Sigmoid colon (tissue), 7 donors: ENCODE measurements at regions of chr3 and their contacts with region 1.

Region 1: DNA sequence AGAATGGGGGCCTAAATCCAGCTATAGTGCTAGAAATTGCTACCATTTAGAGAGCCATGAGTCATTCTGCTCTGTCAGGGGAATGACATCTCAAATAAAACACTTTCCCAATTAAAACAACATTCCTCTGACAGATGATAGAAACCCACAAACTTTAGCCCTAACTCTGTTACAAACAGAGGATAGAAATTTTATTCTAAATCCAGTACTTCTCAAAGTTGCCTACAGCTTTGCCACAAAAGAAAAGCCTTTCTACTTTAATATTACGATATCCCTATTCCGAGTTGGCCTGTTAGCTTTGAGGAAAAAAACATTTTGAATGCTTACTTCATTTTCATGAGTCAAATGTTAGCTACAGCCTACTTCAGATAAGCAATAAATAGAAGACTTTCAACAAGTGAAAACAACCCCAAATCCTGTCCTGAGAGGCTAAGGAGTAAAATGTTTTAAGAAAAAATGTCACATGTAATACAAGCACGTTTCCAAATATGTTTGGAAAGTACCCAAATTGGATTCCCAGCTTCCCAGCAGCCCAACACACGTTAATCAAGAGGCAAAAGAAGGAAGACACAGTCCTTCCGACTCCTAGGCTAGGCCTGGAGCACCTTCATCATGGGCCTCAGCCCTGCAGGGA is 83.6 kb downstream of the ATP1B3 start:
- DNase-seq: no peak
- H3K4me3 ChIP-seq: no peak overlapping the region
- H3K27ac ChIP-seq: peak overlapping the region in 3 of 4 donors; percentile 32 to 64 (median 51)
- H3K4me1 ChIP-seq: peaks cover 0 to 22% (median 14%) of the 10 kb centered on the region in 4 donors
- H3K27me3 ChIP-seq: no peaks in the 10 kb centered on the region
- CTCF ChIP-seq: no peak
- EP300 ChIP-seq: no peak
- POLR2A ChIP-seq: no peak

Region 2: GRCh38 chr3:142007710-142008399 is 47.8 kb after region 1 on chr3:
- intact Hi-C with region 1: no loop called
- DNase-seq: no peak
- H3K4me3 ChIP-seq: no peak overlapping the region
- H3K27ac ChIP-seq: no peak overlapping the region
- H3K4me1 ChIP-seq: peaks cover 0 to 30% (median 20%) of the 10 kb centered on the region in 4 donors
- H3K27me3 ChIP-seq: no peaks in the 10 kb centered on the region
- CTCF ChIP-seq: no peak
- EP300 ChIP-seq: no peak
- POLR2A ChIP-seq: no peak

Region 3: DNA sequence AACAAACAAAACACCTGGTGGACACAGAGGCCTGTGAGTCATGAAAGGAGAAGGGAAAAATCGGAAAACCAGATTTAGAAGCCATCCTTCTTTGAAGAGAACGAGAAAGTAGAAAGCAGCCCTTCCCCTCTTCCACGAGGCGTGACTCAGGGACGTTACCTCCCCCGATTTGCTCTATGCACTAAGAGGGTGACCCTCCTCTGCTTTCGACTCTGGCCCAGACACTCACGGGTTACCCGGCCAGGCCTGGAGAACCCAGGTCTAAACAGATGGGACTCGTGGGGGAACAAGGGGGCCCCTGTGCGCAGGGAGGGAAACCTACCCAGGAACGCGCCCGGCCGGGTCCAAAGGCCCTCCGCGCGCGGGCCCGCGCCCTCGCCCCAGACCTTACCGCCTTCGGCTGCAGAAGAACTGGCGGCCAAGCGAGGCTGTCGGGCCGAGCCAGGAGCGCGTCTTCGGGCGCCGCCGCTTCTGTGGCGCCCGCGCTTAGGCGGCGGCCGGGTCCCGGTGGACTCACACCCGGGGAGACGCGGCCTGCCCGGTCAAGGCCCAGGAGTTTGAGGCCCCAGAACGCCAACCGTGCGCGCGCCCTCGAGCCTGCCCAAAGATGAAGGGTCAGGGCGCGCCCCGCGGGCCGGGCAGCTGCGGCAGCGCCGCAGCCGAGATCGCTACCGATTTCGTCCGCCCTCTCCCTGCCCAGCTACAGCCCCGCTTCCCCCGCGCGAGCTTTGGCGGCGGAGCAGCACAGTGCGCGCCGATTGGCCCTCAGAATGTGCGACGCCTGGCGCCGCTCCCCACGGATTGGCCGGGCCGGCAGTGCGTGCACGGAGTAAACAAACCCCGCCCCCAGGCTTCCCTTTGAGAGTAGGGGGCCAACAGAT is 189.0 kb after region 1 on chr3 and contains the start of gene TFDP2:
- intact Hi-C with region 1: loop called (anchors 10 kb)
- DNase-seq: peak; percentile 96
- H3K4me3 ChIP-seq: peak within 1 kb of the TSS; percentile 71 to 91 (median 76)
- H3K27ac ChIP-seq: peak within 1 kb of the TSS; percentile 85 to 97 (median 94)
- H3K4me1 ChIP-seq: peaks cover 0 to 47% (median 37%) of the 10 kb centered on the region in 4 donors
- H3K27me3 ChIP-seq: no peaks in the 10 kb centered on the region
- CTCF ChIP-seq: no peak
- EP300 ChIP-seq: no peak
- POLR2A ChIP-seq: peak; percentile 47 to 57
- total RNA-seq, gene TFDP2: 52.3 to 74.8 (median 61.4) TPM